Caco-2 (cell line): ENCODE measurements at regions of chr16 and their contacts with region 1.

Region 1: DNA sequence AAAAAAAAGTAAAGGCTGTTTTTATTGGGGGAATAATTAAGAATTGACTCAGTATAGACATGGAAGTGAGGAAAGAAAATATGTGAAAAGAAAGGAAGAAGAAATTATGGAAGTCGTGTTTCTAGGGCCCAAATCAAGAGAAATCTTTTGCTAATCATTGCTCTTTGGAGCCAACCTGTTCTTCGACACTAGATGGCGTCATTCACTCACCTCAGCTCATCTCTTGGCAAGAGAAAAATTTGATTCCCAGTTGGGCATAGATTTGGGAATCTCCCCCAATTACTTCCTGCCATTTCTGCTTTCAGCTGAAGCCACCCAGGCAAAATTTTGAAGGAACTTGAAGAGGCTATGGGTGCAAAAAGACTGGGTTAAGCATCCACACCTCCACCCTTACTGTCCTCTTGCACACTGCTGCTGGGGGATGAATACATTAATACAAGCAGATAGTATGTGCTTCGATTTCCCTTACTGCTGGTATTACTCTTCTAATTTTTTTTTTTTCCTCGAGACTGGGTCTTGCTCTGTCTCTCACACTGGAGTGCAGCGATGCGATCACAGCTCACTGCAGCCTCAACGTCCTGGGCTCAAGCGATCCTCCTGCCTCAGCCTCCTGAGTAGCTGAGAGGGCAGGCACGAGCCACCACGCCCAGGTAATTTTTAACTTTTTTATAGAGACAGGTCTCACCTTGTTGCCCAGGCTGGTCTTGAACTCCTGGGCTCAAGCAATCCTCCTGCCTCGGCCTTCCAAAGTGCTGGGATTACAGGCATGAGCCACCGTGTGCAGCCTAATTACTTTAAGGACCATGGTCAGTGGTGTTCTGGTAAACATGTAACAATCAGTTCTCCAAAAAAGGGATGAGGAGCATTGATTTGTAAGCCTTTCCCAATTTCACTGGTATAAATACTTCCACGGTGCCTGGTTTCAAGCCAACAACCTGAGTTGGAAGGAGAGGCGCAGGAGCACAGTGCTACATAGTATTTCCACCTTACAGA is 13.5 kb downstream of the PSMD7 start:
- DNase-seq: peak in 1 of 2 experiments; percentile 64
- H3K4me3 ChIP-seq: no peak overlapping the region
- H3K4me3 Mint-ChIP-seq: no peak overlapping the region
- H3K27ac Mint-ChIP-seq: no peak overlapping the region
- H3K4me1 ChIP-seq: peaks cover 4% of the 10 kb centered on the region
- H3K4me1 Mint-ChIP-seq: peaks cover 11% of the 10 kb centered on the region
- H3K27me3 ChIP-seq: no peaks in the 10 kb centered on the region
- H3K27me3 Mint-ChIP-seq: no peaks in the 10 kb centered on the region
- CTCF ChIP-seq: peak; percentile 77 to 90

Region 2: DNA sequence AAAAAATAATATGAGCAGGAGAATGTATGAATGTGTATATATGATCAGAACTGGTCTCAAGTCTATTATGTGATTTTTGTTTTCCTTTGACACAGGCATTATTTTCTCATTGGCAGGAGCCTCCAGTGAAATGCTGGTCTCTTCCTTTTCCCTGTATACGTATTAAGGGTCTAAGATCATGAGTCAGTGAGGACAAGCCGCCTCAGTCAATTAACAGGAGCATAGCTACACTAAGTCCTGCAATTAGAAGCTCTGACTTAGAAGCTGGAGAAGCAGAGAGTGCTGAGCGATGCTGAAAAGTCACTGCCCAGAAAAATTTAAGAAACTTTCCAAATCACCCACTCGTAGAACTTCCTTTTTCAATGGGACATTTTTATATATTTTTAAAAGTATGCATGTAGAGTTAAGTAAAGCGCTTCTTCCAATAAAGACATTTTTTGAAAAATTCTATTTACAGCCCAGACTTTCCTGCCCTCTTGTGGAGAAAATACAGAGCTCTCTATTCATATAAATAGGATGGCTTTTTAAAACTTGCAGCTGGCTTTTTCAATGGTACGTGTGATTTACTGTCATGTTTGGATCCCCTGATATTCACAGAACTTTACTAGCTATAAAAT is 83.6 kb before region 1 on chr16:
- CTCF ChIA-PET with region 1: no interaction called
- POLR2A ChIA-PET with region 1: no interaction called
- intact Hi-C with region 1: no loop called
- DNase-seq: no peak
- H3K4me3 ChIP-seq: no peak overlapping the region
- H3K4me3 Mint-ChIP-seq: no peak overlapping the region
- H3K27ac Mint-ChIP-seq: no peak overlapping the region
- H3K4me1 ChIP-seq: no peaks in the 10 kb centered on the region
- H3K4me1 Mint-ChIP-seq: no peaks in the 10 kb centered on the region
- H3K27me3 ChIP-seq: peaks cover 1% of the 10 kb centered on the region; the same call in 1 of the 2 replicates
- H3K27me3 Mint-ChIP-seq: peaks cover 21% of the 10 kb centered on the region
- CTCF ChIP-seq: peak; percentile 55 to 58

Region 3: GRCh38 chr16:74325641-74326040 is 15.6 kb after region 1 on chr16:
- CTCF ChIA-PET with region 1: interaction called, 4 read pairs
- POLR2A ChIA-PET with region 1: no interaction called
- intact Hi-C with region 1: loop called (anchors 1 kb)
- DNase-seq: no peak
- H3K4me3 ChIP-seq: no peak overlapping the region
- H3K4me3 Mint-ChIP-seq: no peak overlapping the region
- H3K27ac Mint-ChIP-seq: no peak overlapping the region
- H3K4me1 ChIP-seq: peaks cover 3% of the 10 kb centered on the region; the same call in 1 of the 2 replicates
- H3K4me1 Mint-ChIP-seq: no peaks in the 10 kb centered on the region
- H3K27me3 ChIP-seq: no peaks in the 10 kb centered on the region
- H3K27me3 Mint-ChIP-seq: no peaks in the 10 kb centered on the region
- CTCF ChIP-seq: no peak

Region 4: DNA sequence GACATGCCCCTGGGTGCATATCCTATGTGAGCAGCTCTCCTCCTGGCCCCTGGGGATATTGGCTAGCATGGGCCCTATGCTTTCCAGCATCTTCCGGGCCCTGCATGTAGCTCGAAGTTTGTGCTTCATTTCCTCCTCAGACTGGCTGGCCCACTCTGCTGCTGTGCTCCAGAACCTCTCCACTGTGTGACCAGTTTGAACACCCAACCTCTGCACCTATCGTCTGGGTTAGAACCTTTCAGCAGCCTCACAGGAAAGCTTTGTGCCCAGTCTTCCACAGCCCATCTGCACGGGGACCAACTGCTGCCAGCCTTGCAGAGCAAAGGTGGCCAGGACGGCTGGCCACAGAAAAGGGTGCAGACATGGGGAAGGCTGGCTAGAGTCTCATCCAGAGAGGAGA is 121.4 kb after region 1 on chr16:
- CTCF ChIA-PET with region 1: no interaction called
- POLR2A ChIA-PET with region 1: no interaction called
- intact Hi-C with region 1: loop called (anchors 1 kb)
- DNase-seq: no peak
- H3K4me3 ChIP-seq: no peak overlapping the region
- H3K4me3 Mint-ChIP-seq: no peak overlapping the region
- H3K27ac Mint-ChIP-seq: no peak overlapping the region
- H3K4me1 ChIP-seq: no peaks in the 10 kb centered on the region
- H3K4me1 Mint-ChIP-seq: no peaks in the 10 kb centered on the region
- H3K27me3 ChIP-seq: no peaks in the 10 kb centered on the region
- H3K27me3 Mint-ChIP-seq: no peaks in the 10 kb centered on the region
- CTCF ChIP-seq: no peak

Region 5: DNA sequence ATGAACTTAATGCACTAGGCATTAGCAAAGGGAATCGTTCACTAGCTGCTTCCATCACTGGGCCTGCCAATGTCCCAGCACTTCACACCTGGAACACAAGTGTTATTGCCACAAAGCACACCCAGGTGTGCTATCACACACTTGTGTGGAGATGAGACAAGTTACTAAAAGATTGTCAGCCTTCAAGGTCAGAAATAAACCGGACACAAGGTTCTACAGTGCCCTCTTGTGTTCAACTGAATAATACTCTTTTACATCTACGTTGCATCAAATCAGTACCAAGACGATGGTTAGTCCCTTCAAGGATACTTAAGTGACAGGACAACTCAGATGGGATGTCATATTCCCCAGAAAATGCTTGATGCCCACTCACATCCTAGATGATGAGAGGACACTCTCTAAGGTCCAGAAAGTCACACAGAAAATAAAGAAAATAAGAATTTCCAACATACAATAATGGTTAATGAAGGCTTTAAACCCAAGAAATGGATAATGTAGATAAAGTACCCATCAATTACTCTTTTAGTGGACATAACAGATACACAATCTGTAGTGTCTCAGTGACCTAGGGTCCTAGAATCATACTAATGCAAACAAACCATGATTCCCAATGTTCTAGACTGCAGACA is 313.2 kb after region 1 on chr16:
- CTCF ChIA-PET with region 1: no interaction called
- POLR2A ChIA-PET with region 1: no interaction called
- intact Hi-C with region 1: loop called (anchors 1 kb)
- DNase-seq: peak; percentile 21 to 48
- H3K4me3 ChIP-seq: no peak overlapping the region
- H3K4me3 Mint-ChIP-seq: no peak overlapping the region
- H3K27ac Mint-ChIP-seq: peak overlapping the region; percentile 35
- H3K4me1 ChIP-seq: no peaks in the 10 kb centered on the region
- H3K4me1 Mint-ChIP-seq: peaks cover under 1% of the 10 kb centered on the region
- H3K27me3 ChIP-seq: no peaks in the 10 kb centered on the region
- H3K27me3 Mint-ChIP-seq: no peaks in the 10 kb centered on the region
- CTCF ChIP-seq: peak; percentile 71 to 73